HepG2 (cell line): ENCODE measurements at regions of chr3 and their contacts with region 1.

Region 1: GRCh38 chr3:120622870-120623731 is 27.0 kb downstream of the NDUFB4 start:
- DNase-seq: peak; percentile 58
- ATAC-seq: peak; percentile 70
- H3K4me3 ChIP-seq: no peak overlapping the region
- H3K27ac ChIP-seq: no peak overlapping the region
- H3K4me1 ChIP-seq: no peaks in the 10 kb centered on the region
- H3K27me3 ChIP-seq: no peaks in the 10 kb centered on the region
- CTCF ChIP-seq: peak; percentile 76
- EP300 ChIP-seq: no peak
- POLR2A ChIP-seq: no peak
- RAD21 ChIP-seq: peak; percentile 37; the same call in 1 of the 2 replicates

Region 2: DNA sequence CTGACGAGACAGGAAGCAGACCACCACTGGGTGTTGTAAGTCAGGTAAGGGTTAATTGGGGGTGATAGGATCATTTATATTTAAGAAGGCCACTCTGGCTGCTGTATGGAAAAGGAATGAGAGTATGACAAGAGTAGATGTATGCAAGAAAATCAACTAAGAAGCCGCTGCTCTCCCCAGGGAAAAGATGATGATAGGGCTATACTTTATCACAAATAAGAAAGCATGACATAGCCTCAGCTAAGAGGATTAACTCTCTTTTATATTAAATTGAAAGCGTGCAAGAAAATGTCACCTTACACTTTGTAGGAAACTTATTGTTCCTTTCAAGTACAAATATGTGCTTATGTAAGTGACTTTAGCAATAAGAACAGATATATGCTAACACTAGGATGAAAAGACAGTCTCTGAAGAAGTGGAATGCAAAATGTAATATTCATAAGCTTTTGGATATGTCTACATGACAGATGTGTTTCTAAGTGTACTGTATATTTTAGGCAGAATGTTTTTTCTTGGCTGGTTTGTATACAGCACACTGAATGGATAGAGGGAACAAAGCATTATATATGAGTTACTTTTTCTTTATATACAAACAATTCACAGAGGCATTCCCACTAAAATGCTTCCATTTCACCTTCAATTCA is 35.6 kb before region 1 on chr3:
- CTCF ChIA-PET with region 1: no interaction called
- POLR2A ChIA-PET with region 1: no interaction called
- in situ Hi-C with region 1: no loop called
- intact Hi-C with region 1: no loop called
- DNase-seq: no peak
- ATAC-seq: no peak
- H3K4me3 ChIP-seq: no peak overlapping the region
- H3K27ac ChIP-seq: no peak overlapping the region
- H3K4me1 ChIP-seq: no peaks in the 10 kb centered on the region
- H3K27me3 ChIP-seq: no peaks in the 10 kb centered on the region
- CTCF ChIP-seq: no peak
- EP300 ChIP-seq: no peak
- POLR2A ChIP-seq: no peak
- RAD21 ChIP-seq: no peak

Region 3: GRCh38 chr3:120795017-120795648 is 172.0 kb after region 1 on chr3:
- CTCF ChIA-PET with region 1: interaction called, 27 read pairs
- POLR2A ChIA-PET with region 1: no interaction called
- in situ Hi-C with region 1: loop called (anchors 5 kb)
- intact Hi-C with region 1: loop called (anchors 1 kb)
- DNase-seq: peak; percentile 73
- ATAC-seq: peak; percentile 94
- H3K4me3 ChIP-seq: no peak overlapping the region
- H3K27ac ChIP-seq: no peak overlapping the region
- H3K4me1 ChIP-seq: peaks cover 27% of the 10 kb centered on the region
- H3K27me3 ChIP-seq: peaks cover 0 to 4% of the 10 kb centered on the region in 2 experiments; a peak in 2 of 5 replicates
- CTCF ChIP-seq: peak; percentile 86
- EP300 ChIP-seq: no peak
- POLR2A ChIP-seq: no peak
- RAD21 ChIP-seq: peak; percentile 78

Region 4: GRCh38 chr3:121152573-121152972 is 529.5 kb after region 1 on chr3:
- CTCF ChIA-PET with region 1: no interaction called
- POLR2A ChIA-PET with region 1: no interaction called
- in situ Hi-C with region 1: no loop called
- intact Hi-C with region 1: loop called (anchors 5 kb)
- DNase-seq: peak; percentile 2
- ATAC-seq: peak; percentile 50; the same call in 2 of the 3 replicates
- H3K4me3 ChIP-seq: no peak overlapping the region
- H3K27ac ChIP-seq: no peak overlapping the region
- H3K4me1 ChIP-seq: no peaks in the 10 kb centered on the region
- H3K27me3 ChIP-seq: no peaks in the 10 kb centered on the region
- CTCF ChIP-seq: no peak
- EP300 ChIP-seq: no peak
- POLR2A ChIP-seq: no peak
- RAD21 ChIP-seq: no peak